Transverse colon (tissue), 4 donors: ENCODE measurements at regions of chr20 and their contacts with region 1.

Region 1: GRCh38 chr20:56629670-56630478 is 768 bp downstream of the TFAP2C start:
- DNase-seq: peak; percentile 64
- H3K4me3 ChIP-seq: peak overlapping the region; percentile 36 to 64 (median 52)
- H3K27ac ChIP-seq: peak overlapping the region; percentile 36 to 79 (median 66)
- H3K4me1 ChIP-seq: peaks cover 11 to 45% (median 31%) of the 10 kb centered on the region in 4 donors
- H3K27me3 ChIP-seq: peaks cover 95% of the 10 kb centered on the region
- CTCF ChIP-seq: peak; percentile 50 to 59 (median 53)
- EP300 ChIP-seq: no peak
- POLR2A ChIP-seq: no peak

Region 2: DNA sequence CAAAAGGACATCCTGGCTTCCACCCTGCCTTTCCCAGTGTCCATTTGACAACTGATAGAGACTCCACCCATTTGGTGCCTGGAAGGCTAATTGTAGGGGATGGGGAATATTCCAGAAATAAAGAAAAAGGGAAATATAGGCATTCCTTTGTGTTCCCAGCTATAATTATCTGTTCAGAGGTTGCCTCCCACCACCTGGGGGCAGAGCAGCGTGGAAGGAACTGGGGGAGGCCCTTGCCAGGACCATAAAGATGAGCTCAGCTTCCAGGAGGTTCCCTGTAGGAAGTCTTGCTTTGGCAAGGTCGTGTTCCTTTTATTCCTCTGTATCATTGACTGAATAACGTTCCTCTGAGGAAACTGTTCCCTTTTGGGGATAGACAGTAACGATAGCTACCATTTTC is 213.9 kb after region 1 on chr20:
- in situ Hi-C with region 1: no loop called
- intact Hi-C with region 1: loop called (anchors 10 kb)
- DNase-seq: no peak
- H3K4me3 ChIP-seq: no peak overlapping the region
- H3K27ac ChIP-seq: no peak overlapping the region
- H3K4me1 ChIP-seq: peaks cover 0 to 8% (median 0%) of the 10 kb centered on the region in 4 donors
- H3K27me3 ChIP-seq: no peaks in the 10 kb centered on the region
- CTCF ChIP-seq: no peak
- EP300 ChIP-seq: no peak
- POLR2A ChIP-seq: no peak

Region 3: GRCh38 chr20:56974499-56975236 is 344.8 kb after region 1 on chr20:
- in situ Hi-C with region 1: no loop called
- intact Hi-C with region 1: loop called (anchors 10 kb)
- DNase-seq: peak; percentile 59
- H3K4me3 ChIP-seq: no peak overlapping the region
- H3K27ac ChIP-seq: no peak overlapping the region
- H3K4me1 ChIP-seq: no peaks in the 10 kb centered on the region
- H3K27me3 ChIP-seq: peaks cover 42% of the 10 kb centered on the region
- CTCF ChIP-seq: peak; percentile 51 to 64 (median 57)
- EP300 ChIP-seq: no peak
- POLR2A ChIP-seq: no peak